ENCODE measurements at regions of chr2 and their contacts with region 1.

Region 1: GRCh38 chr2:235669269-235669831 is 175.5 kb downstream of the AGAP1 start:
- DNase-seq: peak; percentile 79
- ATAC-seq: peak; percentile 87
- H3K4me3 ChIP-seq: peak overlapping the region; percentile 36
- H3K27ac ChIP-seq: no peak overlapping the region
- H3K4me1 ChIP-seq: peaks cover 19% of the 10 kb centered on the region
- H3K27me3 ChIP-seq: no peaks in the 10 kb centered on the region
- CTCF ChIP-seq: no peak

Region 2: GRCh38 chr2:235595422-235596010 is 73.8 kb before region 1 on chr2:
- intact Hi-C with region 1: loop called (anchors 5 kb)
- DNase-seq: no peak
- ATAC-seq: peak; percentile 67
- H3K4me3 ChIP-seq: no peak overlapping the region
- H3K27ac ChIP-seq: no peak overlapping the region
- H3K4me1 ChIP-seq: peaks cover 4% of the 10 kb centered on the region
- H3K27me3 ChIP-seq: no peaks in the 10 kb centered on the region
- CTCF ChIP-seq: peak; percentile 86

Region 3: GRCh38 chr2:235606004-235606715 is 63.2 kb before region 1 on chr2:
- intact Hi-C with region 1: no loop called
- DNase-seq: no peak
- ATAC-seq: no peak
- H3K4me3 ChIP-seq: no peak overlapping the region
- H3K27ac ChIP-seq: no peak overlapping the region
- H3K4me1 ChIP-seq: peaks cover 6% of the 10 kb centered on the region
- H3K27me3 ChIP-seq: no peaks in the 10 kb centered on the region
- CTCF ChIP-seq: no peak

Region 4: GRCh38 chr2:235725016-235725489 is 55.7 kb after region 1 on chr2:
- intact Hi-C with region 1: loop called (anchors 10 kb)
- DNase-seq: no peak
- ATAC-seq: peak; percentile 33
- H3K4me3 ChIP-seq: no peak overlapping the region
- H3K27ac ChIP-seq: no peak overlapping the region
- H3K4me1 ChIP-seq: peaks cover 11% of the 10 kb centered on the region
- H3K27me3 ChIP-seq: no peaks in the 10 kb centered on the region
- CTCF ChIP-seq: no peak

Region 5: GRCh38 chr2:235854276-235854675 is 184.9 kb after region 1 on chr2:
- intact Hi-C with region 1: no loop called
- DNase-seq: no peak
- ATAC-seq: no peak
- H3K4me3 ChIP-seq: no peak overlapping the region
- H3K27ac ChIP-seq: no peak overlapping the region
- H3K4me1 ChIP-seq: no peaks in the 10 kb centered on the region
- H3K27me3 ChIP-seq: no peaks in the 10 kb centered on the region
- CTCF ChIP-seq: no peak